Posterior vena cava (tissue), 2 donors: ENCODE measurements at regions of chr12 and their contacts with region 1.

Region 1: GRCh38 chr12:968545-968944 is 19.1 kb upstream of the RAD52 start:
- DNase-seq: no peak

Region 2: GRCh38 chr12:650983-651382 is 317.6 kb before region 1 on chr12:
- intact Hi-C with region 1: loop called in 1 of 2 experiments (anchors 10 kb)
- DNase-seq: peak; percentile 34

Region 3: DNA sequence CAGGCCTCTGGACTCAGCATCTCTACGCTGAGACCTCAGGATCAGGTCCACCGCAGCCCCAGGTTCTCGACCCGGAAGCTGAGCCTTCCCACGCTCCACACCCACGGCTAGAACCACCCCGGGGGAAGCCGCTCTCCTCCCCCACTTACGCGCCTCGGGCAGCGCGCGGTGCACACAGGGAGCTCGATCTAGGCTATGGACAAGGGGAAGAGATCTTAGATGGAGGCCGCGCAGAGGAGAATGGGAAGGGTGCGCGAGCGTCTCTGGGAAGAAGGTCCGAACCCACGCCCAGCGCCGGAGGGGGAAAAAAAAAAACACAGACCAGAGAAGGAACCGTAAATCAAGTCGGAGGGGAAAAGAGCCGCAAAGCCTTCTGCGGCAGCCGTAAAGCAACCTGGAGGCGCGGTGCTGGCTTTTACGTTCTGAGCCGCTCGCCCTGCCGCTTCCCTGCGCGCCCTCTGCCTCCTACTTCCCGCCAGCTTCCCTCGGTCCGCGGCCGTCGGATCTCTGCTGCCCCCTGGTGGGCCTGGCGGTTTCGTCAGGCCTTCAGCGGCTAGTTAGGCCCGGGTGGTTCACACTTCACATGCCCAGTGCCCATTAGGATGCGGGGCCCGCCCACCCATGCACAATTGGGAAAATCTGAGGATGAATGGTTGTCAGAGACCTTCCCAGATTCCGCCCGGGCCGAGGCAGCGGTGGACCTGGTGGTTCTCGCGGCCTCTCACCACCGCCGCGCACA is 18.9 kb before region 1 on chr12 and contains the start of gene RAD52:
- intact Hi-C with region 1: loop called in 1 of 2 experiments (anchors 2 kb)
- DNase-seq: peak; percentile 100
- total RNA-seq, gene RAD52: 7.9 to 10.5 TPM